Thyroid gland (tissue), 4 donors: ENCODE measurements at regions of chr6 and their contacts with region 1.

Region 1: DNA sequence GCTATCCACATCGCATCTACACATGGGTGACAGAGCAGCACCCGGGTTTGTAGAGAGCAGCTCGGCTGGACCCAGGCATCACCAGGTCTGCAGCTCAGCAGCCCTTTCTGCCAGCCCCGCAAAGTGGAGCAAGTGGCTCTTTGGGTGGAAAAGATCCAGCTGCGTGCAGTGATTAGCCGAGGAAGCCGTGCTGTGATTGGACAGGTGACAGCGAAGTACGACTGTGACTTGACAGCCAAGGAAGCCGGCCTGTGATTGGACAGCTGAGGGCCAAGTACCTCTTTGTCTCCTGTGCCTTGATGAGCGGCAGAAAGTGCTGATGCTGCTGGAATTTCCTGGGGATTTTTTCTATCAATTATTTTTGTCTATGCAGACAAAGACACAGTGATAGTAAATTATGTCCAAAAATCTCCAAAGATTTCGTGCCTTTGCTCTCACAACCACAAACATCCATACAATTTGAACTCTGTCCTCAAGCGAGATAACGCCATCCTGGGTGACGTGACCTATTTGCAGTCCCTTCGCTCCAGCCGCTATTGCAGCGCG is 62.3 kb upstream of the GPR31 start:
- DNase-seq: no peak
- H3K4me3 ChIP-seq: no peak overlapping the region
- H3K27ac ChIP-seq: no peak overlapping the region
- H3K4me1 ChIP-seq: no peaks in the 10 kb centered on the region
- H3K27me3 ChIP-seq: no peaks in the 10 kb centered on the region
- CTCF ChIP-seq: no peak
- POLR2A ChIP-seq: no peak

Region 2: DNA sequence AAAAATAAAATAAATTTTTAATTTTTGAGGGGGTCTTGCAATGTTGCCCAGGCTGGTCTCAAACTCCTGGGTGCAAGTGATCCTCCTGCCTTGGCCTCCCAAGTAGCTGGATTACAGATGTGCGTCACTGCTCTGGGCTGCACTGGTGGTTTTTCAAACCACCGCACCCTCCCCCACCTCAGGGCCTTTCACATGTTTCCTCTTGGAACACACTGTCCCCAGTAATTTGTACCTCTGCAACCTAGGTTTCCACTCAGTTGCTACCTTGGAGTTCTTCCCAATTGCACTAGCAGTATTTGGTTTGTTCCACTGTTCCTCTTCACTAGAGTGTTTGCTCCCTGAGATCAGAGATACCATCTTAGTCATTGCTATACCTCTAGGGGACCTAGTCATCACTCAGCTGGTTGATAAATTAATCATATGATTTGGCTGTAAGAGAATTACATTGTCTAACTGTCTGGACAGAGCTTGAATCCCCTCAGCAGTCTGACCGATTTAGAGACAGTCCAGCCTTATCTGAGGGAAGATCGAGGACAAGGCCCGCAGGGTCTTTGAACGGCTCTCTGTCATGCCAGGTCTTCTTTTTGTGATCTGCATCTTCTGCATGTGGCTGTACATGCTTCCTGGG is 188.8 kb before region 1 on chr6:
- intact Hi-C with region 1: no loop called
- DNase-seq: peak; percentile 51 to 52
- H3K4me3 ChIP-seq: no peak overlapping the region
- H3K27ac ChIP-seq: peak overlapping the region in 1 of 3 donors; percentile 50
- H3K4me1 ChIP-seq: peaks cover 0 to 8% of the 10 kb centered on the region in 2 donors
- H3K27me3 ChIP-seq: no peaks in the 10 kb centered on the region
- CTCF ChIP-seq: no peak
- POLR2A ChIP-seq: no peak

Region 3: DNA sequence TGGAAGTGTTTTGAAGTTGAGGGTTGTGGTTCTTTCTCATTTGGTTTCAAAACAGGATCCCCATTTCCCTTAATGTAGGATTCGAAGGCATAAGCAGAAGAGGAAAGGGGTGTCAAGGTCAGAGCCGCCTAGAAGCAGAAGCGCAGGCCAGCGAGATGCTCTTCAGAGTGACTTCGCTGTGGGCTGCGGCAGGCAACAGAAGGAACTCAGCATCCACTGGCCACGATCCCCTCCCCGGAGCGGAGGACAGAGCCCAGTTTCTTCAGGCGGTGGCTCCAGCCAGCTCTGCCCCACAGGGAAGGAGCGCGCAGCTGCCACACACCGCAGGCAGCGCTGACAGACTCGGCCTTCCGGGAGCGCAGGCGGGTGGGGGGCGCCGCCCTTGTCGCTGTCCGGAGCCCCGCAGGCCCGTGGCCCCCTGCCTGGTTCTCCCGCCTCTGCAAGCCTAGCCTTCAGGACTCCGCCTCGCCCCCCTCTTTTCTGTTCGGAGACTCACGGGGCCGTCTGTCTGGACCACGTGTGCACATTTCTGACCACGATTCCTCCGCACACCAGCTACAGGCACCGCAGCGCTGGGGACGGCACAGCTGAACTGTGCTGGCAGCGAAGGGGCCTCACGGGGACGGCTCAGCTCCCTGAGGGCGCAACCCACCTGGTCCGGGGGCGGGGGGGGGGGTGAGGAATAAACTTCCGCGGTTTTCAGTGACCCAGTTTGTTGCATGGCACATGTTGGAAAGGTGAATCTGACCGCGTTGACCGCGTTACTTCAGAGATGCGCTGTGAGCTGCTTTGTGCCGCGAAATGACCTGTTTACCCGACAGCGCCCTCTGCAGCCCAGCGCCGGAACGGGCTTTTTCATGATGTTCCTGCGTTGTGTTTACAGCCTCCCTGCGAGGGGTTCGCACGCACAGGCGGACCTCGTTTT is 131.0 kb after region 1 on chr6:
- intact Hi-C with region 1: loop called (anchors 5 kb)
- DNase-seq: peak; percentile 70 to 80
- H3K4me3 ChIP-seq: peak overlapping the region in 2 of 3 donors; percentile 1 to 24
- H3K27ac ChIP-seq: no peak overlapping the region
- H3K4me1 ChIP-seq: peaks cover 5 to 13% of the 10 kb centered on the region in 2 donors
- H3K27me3 ChIP-seq: no peaks in the 10 kb centered on the region
- CTCF ChIP-seq: peak in 5 of 6 experiments; percentile 40 to 73 (median 62)
- POLR2A ChIP-seq: no peak